Adrenal gland (tissue), 19 donors: ENCODE measurements at regions of chr5 and their contacts with region 1.

Region 1: GRCh38 chr5:6632917-6633468 is at the starts of genes NSUN2 and SRD5A1:
- DNase-seq: peak; percentile 87 to 92 (median 90)
- H3K4me3 ChIP-seq: peak within 1 kb of the TSS; percentile 34 to 92 (median 70)
- H3K27ac ChIP-seq: peak within 1 kb of the TSS; percentile 86 to 92 (median 91)
- H3K4me1 ChIP-seq: peaks cover 6 to 24% of the 10 kb centered on the region in 2 donors
- H3K27me3 ChIP-seq: no peaks in the 10 kb centered on the region
- CTCF ChIP-seq: no peak
- POLR2A ChIP-seq: peak; percentile 29 to 56
- total RNA-seq, gene NSUN2: 21.3 to 44.1 (median 36.0) TPM
- total RNA-seq, gene SRD5A1: 1.9 to 15.0 (median 9.1) TPM

Region 2: GRCh38 chr5:6712577-6713275 is 79.7 kb after region 1 on chr5:
- intact Hi-C with region 1: loop called in 1 of 2 experiments (anchors 10 kb)
- DNase-seq: peak; percentile 96 to 98 (median 97)
- H3K4me3 ChIP-seq: peak overlapping the region; percentile 64 to 95 (median 72)
- H3K27ac ChIP-seq: peak overlapping the region; percentile 97 to 100 (median 99)
- H3K4me1 ChIP-seq: peaks cover 15 to 29% of the 10 kb centered on the region in 2 donors
- H3K27me3 ChIP-seq: no peaks in the 10 kb centered on the region
- CTCF ChIP-seq: no peak
- POLR2A ChIP-seq: peak; percentile 74 to 88

Region 3: DNA sequence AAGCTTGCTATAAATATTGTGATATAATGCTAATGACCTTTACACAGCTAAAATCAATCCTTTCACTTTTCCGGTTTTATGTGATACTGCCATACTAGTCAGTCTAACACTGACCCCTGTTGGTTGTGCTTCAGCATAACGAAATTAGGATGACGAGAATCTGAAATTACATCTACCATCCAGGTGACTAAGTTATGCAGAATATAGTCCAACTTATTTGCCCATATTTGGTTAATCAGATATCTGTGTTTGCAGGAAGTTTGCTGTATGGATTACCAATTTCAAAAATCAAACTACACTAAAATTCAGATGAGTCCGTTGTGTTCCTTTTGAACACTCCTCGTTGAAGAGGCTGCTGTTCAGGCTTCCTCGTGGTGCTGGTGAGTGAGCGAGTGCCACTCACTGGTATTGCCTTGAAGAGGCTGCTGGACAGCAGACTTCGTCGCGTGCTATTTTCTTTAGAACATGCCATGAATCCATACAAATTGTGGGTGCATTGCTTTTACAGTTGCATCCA is 112.8 kb after region 1 on chr5:
- intact Hi-C with region 1: loop called (anchors 2 to 10 kb)
- DNase-seq: peak in 2 of 7 donors; percentile 40 to 51
- H3K4me3 ChIP-seq: no peak overlapping the region
- H3K27ac ChIP-seq: peak overlapping the region in 1 of 5 donors; percentile 21
- H3K4me1 ChIP-seq: no peaks in the 10 kb centered on the region
- H3K27me3 ChIP-seq: no peaks in the 10 kb centered on the region
- CTCF ChIP-seq: peak; percentile 58 to 88 (median 85)
- POLR2A ChIP-seq: no peak